ENCODE measurements at regions of chr21 and their contacts with region 1.

Region 1: GRCh38 chr21:15293240-15293639 is 228.4 kb upstream of the NRIP1 start:
- DNase-seq: peak; percentile 83
- H3K4me3 ChIP-seq: no peak overlapping the region
- H3K27ac ChIP-seq: peak overlapping the region; percentile 14
- H3K4me1 ChIP-seq: peaks cover 24% of the 10 kb centered on the region
- H3K27me3 ChIP-seq: no peaks in the 10 kb centered on the region
- CTCF ChIP-seq: no peak

Region 2: GRCh38 chr21:15221799-15222386 is 71.3 kb before region 1 on chr21:
- CTCF ChIA-PET with region 1: no interaction called
- dilution Hi-C with region 1: no loop called
- in situ Hi-C with region 1: no loop called
- intact Hi-C with region 1: loop called (anchors 5 kb)
- DNase-seq: peak; percentile 96
- H3K4me3 ChIP-seq: no peak overlapping the region
- H3K27ac ChIP-seq: peak overlapping the region; percentile 87
- H3K4me1 ChIP-seq: peaks cover 38% of the 10 kb centered on the region
- H3K27me3 ChIP-seq: no peaks in the 10 kb centered on the region
- CTCF ChIP-seq: peak in 1 of 2 donors; percentile 8

Region 3: DNA sequence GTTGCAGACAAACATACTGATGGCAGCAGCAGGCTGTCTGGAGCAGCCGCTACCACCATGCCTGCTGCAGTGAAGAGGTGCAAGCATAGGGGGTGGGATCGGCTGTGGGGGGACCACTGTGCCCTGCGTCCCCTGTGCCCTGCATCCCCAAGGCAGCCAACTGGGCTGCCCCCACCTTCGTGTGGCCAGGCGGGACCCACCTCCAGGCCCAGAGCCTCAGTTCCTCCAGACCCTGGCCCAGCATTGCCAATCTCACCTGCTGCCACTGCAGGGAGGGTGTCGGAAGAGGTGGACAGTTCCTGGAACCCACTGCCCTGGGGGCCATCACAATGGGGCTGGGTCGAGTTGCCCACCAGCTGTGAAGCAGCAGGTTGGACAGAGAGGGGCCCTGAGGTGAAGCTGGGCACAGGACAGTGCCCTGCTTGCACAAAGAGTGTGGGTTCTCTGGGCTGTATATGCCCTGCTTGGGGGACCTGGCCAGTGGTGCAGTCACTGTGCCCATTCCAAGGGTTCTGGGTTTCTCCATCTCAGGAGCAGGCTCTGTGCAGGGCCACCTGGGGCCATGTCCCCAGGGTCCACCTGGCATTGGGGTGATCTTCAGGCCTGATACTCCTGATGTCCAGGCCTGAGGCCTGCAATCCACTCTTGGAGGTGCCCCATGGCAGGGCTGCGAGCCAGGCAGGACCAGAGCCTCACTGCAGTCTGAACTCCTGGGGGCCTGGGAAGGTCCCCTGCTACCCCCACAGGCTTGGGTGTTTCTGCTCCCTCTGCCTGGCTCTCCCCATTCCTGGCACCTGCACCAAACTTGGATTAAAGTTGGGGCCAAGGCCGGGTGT is 33.0 kb after region 1 on chr21:
- CTCF ChIA-PET with region 1: no interaction called
- dilution Hi-C with region 1: no loop called
- in situ Hi-C with region 1: no loop called
- intact Hi-C with region 1: no loop called
- DNase-seq: no peak
- H3K4me3 ChIP-seq: no peak overlapping the region
- H3K27ac ChIP-seq: no peak overlapping the region
- H3K4me1 ChIP-seq: no peaks in the 10 kb centered on the region
- H3K27me3 ChIP-seq: no peaks in the 10 kb centered on the region
- CTCF ChIP-seq: no peak

Measured in mammary epithelial cell (primary cell).